GM12878 (cell line): ENCODE measurements at regions of chr15 and their contacts with region 1.

Region 1: GRCh38 chr15:72464251-72464650 is 9.9 kb upstream of the ARIH1 start:
- DNase-seq: no peak
- ATAC-seq: no peak
- H3K4me3 ChIP-seq: no peak overlapping the region
- H3K27ac ChIP-seq: no peak overlapping the region
- H3K4me1 ChIP-seq: no peaks in the 10 kb centered on the region
- H3K27me3 ChIP-seq: no peaks in the 10 kb centered on the region
- CTCF ChIP-seq: no peak
- EP300 ChIP-seq: no peak
- POLR2A ChIP-seq: no peak
- RAD21 ChIP-seq: no peak

Region 2: DNA sequence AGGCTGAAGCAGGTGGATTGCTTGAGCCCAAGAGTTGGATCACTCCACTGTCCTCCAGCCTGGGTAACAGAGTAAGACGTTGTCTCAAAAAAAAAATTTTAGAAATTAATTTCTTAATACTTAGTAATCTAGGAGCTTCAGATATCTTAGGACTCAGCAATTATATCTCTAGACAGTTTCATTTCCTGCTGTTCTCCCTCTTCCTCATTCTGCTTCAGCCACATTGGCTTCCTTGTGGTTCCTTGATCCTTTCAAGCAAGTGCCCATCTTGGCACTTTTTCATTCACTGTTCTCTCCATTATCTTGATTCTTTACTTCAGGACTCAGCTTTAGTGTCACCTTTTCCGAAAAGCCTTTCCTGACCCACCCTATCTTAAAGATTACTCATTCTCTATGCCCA is 43.7 kb before region 1 on chr15:
- CTCF ChIA-PET with region 1: no interaction called
- POLR2A ChIA-PET with region 1: no interaction called
- RAD21 ChIA-PET with region 1: no interaction called
- SMC1A ChIA-PET with region 1: no interaction called
- in situ Hi-C with region 1: no loop called
- intact Hi-C with region 1: no loop called
- DNase-seq: no peak
- ATAC-seq: no peak
- H3K4me3 ChIP-seq: no peak overlapping the region
- H3K27ac ChIP-seq: no peak overlapping the region
- H3K4me1 ChIP-seq: no peaks in the 10 kb centered on the region
- H3K27me3 ChIP-seq: peaks cover 0 to 2% of the 10 kb centered on the region in 2 experiments; a peak in 1 of 4 replicates
- CTCF ChIP-seq: no peak
- EP300 ChIP-seq: no peak
- POLR2A ChIP-seq: no peak
- RAD21 ChIP-seq: no peak

Region 3: GRCh38 chr15:72437650-72438316 is 26.5 kb before region 1 on chr15:
- CTCF ChIA-PET with region 1: no interaction called
- POLR2A ChIA-PET with region 1: no interaction called
- RAD21 ChIA-PET with region 1: no interaction called
- SMC1A ChIA-PET with region 1: no interaction called
- in situ Hi-C with region 1: no loop called
- intact Hi-C with region 1: loop called (anchors 1 kb)
- DNase-seq: no peak
- ATAC-seq: no peak
- H3K4me3 ChIP-seq: no peak overlapping the region
- H3K27ac ChIP-seq: no peak overlapping the region
- H3K4me1 ChIP-seq: no peaks in the 10 kb centered on the region
- H3K27me3 ChIP-seq: no peaks in the 10 kb centered on the region; a peak in 1 of 4 replicates
- CTCF ChIP-seq: no peak
- EP300 ChIP-seq: no peak
- POLR2A ChIP-seq: no peak
- RAD21 ChIP-seq: no peak

Region 4: DNA sequence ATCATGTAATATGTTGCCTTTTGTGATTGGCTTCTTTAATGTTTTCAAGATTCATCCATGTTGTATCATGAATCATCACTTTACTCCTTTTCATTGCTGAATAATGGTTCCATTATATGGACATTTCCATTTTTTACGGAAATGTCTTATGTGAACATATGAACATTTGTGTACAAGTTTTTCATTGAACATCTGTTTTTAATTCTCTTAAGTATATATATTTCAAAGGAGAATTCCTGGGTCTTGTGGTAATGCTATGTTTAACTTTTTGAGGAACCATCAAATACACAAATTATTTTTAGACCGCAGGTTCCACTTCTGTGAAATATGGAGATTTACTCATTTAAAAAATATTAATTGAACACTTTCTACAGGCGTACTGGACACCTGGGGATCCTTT is 95.5 kb after region 1 on chr15:
- CTCF ChIA-PET with region 1: no interaction called
- POLR2A ChIA-PET with region 1: no interaction called
- RAD21 ChIA-PET with region 1: no interaction called
- SMC1A ChIA-PET with region 1: no interaction called
- in situ Hi-C with region 1: no loop called
- intact Hi-C with region 1: no loop called
- DNase-seq: no peak
- ATAC-seq: no peak
- H3K4me3 ChIP-seq: no peak overlapping the region
- H3K27ac ChIP-seq: no peak overlapping the region
- H3K4me1 ChIP-seq: no peaks in the 10 kb centered on the region
- H3K27me3 ChIP-seq: no peaks in the 10 kb centered on the region
- CTCF ChIP-seq: no peak
- EP300 ChIP-seq: no peak
- POLR2A ChIP-seq: no peak
- RAD21 ChIP-seq: no peak